MCF 10A (cell line): ENCODE measurements at regions of chr7 and their contacts with region 1.

Region 1: DNA sequence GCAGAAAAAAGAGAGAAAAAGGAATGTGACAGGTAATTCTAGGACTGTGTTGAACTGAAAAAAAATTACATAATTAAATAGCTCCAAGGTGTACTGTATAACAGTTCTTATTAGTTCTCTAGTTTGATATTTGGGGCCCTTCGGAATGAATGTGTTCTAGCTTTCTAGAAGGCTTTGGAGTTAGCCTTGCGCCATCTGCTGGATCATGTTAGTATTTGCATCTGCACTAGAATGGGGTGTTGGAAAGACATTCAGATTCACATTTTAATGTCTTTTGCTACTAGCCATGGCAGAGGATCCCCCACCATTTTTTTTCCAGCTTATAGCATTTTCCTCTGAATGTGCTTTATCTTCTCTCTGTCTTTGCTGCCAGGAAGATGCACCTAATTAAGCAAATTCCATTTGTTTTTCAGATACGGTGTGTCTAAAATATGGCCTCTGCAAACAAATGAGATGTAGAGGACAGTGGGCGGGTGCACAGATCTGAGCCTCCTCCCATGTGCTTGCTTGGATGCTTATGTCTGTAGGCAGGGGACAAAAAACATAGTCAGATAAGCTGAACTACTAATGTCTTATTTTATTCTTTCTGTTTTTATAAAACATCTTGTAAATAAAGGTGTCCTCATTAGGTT is 238.5 kb downstream of the PHF14 start:
- DNase-seq: peak; percentile 85
- H3K4me3 Mint-ChIP-seq: no peak overlapping the region
- H3K27ac Mint-ChIP-seq: no peak overlapping the region
- H3K4me1 Mint-ChIP-seq: no peaks in the 10 kb centered on the region
- H3K27me3 Mint-ChIP-seq: no peaks in the 10 kb centered on the region
- CTCF ChIP-seq: peak; percentile 78

Region 2: DNA sequence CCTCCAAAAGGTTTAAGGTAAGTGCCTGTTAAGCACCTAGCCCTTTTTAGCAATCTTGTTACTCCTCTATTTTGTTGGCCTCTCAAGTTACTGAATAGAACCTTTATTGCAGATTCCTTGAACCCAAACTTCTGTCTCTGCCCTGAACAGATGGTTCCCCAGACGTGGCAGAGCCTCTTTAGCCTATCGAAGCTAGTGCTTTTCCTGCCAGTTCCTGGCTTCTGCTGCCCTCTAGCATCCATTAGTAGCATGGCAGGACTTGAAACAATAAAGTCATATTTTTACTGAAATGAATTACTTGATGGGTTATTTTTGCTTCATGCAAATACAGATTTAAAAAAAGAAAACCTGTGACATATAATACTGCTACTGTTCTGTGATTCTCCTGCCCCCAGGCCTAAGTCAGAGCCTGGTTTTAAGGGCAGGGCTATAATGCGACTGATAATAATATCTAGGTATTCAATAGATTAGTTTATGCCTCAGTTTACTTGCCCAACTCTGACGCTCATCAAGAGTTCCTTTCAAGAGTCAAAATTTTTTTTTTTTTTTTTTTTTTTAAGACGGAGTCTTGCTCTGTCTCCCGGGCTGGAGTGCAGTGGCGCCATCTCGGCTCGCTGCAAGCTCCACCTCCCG is 322.8 kb before region 1 on chr7:
- CTCF ChIA-PET with region 1: no interaction called
- POLR2A ChIA-PET with region 1: no interaction called
- intact Hi-C with region 1: loop called (anchors 2 kb)
- DNase-seq: peak; percentile 68
- H3K4me3 Mint-ChIP-seq: no peak overlapping the region
- H3K27ac Mint-ChIP-seq: no peak overlapping the region
- H3K4me1 Mint-ChIP-seq: no peaks in the 10 kb centered on the region
- H3K27me3 Mint-ChIP-seq: no peaks in the 10 kb centered on the region
- CTCF ChIP-seq: peak; percentile 83

Region 3: DNA sequence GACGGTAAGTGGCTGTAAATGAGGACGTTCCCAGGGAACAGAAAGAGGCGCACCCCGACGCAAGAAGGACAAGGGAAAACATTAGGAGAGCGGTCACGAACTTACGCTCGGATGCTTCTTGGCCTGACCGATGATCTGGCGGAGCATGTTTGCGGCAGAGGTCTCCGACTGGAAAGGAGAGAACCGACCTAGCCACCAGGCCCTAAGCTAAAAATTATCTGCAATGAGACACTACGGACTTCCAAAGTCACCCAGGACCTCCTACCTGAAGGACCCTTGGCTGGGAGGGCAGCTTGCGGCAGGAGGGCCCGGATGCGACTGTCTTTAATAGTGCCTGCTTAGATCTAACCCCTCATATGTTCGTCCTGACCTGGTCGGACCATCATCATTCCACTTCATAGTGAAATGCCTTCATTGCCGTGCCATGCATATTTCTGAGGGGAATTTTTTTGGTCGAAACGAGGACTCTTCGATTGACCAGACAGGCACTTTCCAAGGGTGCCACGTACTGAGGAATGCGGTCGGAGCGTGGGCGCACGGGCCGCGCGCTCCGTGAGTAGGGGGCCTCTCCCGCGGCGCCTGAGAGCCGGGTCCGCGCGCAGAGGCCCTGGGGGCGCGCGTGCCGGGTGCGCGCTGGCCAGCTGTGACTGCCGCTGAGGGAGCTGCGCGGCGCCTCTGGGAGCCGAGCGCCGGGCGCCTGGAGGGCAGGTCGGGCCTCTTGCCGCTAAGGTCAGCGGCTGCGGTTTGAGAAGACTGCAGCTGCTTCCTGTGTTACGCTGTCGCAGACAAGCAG is 272.1 kb before region 1 on chr7:
- CTCF ChIA-PET with region 1: interaction called, 7 read pairs
- POLR2A ChIA-PET with region 1: no interaction called
- intact Hi-C with region 1: loop called (anchors 5 kb)
- DNase-seq: peak; percentile 94
- H3K4me3 Mint-ChIP-seq: no peak overlapping the region
- H3K27ac Mint-ChIP-seq: no peak overlapping the region
- H3K4me1 Mint-ChIP-seq: peaks cover 3% of the 10 kb centered on the region
- H3K27me3 Mint-ChIP-seq: no peaks in the 10 kb centered on the region
- CTCF ChIP-seq: no peak

Region 4: GRCh38 chr7:11194492-11194891 is 17.7 kb before region 1 on chr7:
- CTCF ChIA-PET with region 1: interaction called, 35 read pairs
- POLR2A ChIA-PET with region 1: no interaction called
- intact Hi-C with region 1: no loop called
- DNase-seq: peak; percentile 10
- H3K4me3 Mint-ChIP-seq: peak overlapping the region; percentile 11
- H3K27ac Mint-ChIP-seq: peak overlapping the region; percentile 54
- H3K4me1 Mint-ChIP-seq: peaks cover 22% of the 10 kb centered on the region
- H3K27me3 Mint-ChIP-seq: no peaks in the 10 kb centered on the region
- CTCF ChIP-seq: no peak

Region 5: DNA sequence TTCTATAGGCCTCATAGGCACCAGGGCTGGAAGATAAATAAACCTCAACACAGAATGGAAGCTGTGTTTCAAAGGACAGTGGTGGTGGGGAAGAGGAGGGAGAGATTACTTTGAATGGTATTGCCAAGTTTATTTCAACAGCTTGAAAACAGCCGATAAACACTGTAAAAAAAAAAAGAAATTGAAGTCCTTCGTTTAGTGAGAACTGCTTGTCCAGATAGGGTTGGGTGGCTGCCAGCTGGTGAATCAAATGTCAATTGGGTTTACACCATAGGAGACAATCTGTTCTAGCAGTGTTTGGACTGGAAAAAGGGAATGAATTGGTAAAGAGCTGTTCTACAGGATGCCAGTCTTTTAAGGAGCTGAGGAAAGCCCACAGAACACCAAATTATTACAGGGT is 16.3 kb after region 1 on chr7:
- CTCF ChIA-PET with region 1: interaction called, 64 read pairs
- POLR2A ChIA-PET with region 1: no interaction called
- intact Hi-C with region 1: no loop called
- DNase-seq: peak; percentile 77
- H3K4me3 Mint-ChIP-seq: peak overlapping the region; percentile 4
- H3K27ac Mint-ChIP-seq: peak overlapping the region; percentile 85
- H3K4me1 Mint-ChIP-seq: peaks cover 30% of the 10 kb centered on the region
- H3K27me3 Mint-ChIP-seq: no peaks in the 10 kb centered on the region
- CTCF ChIP-seq: no peak

Region 6: DNA sequence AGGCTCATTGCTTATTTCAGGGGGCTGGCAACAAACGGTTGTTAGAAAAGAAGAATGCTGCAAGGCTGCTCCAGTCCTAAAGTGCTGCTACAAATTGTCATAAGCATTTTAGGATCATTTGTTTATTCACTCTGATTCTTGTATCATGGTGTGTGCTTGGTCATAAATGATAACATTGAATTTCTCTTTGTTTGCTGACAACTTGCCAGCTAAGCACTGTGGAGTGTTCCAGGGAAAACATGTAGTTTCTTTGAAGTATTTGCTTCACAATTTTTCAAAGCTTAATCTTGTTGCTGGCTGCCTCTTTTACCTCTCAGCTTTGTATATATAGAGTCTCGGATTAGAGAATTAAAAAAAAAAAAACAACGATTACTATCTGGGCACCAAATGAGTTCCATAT is 24.5 kb after region 1 on chr7:
- CTCF ChIA-PET with region 1: interaction called, 11 read pairs
- POLR2A ChIA-PET with region 1: no interaction called
- intact Hi-C with region 1: no loop called
- DNase-seq: no peak
- H3K4me3 Mint-ChIP-seq: no peak overlapping the region
- H3K27ac Mint-ChIP-seq: no peak overlapping the region
- H3K4me1 Mint-ChIP-seq: peaks cover 11% of the 10 kb centered on the region
- H3K27me3 Mint-ChIP-seq: no peaks in the 10 kb centered on the region
- CTCF ChIP-seq: no peak

Region 7: GRCh38 chr7:11343818-11344413 is 131.7 kb after region 1 on chr7:
- CTCF ChIA-PET with region 1: interaction called, 13 read pairs
- POLR2A ChIA-PET with region 1: no interaction called
- intact Hi-C with region 1: loop called (anchors 2 kb)
- DNase-seq: peak; percentile 62
- H3K4me3 Mint-ChIP-seq: no peak overlapping the region
- H3K27ac Mint-ChIP-seq: no peak overlapping the region
- H3K4me1 Mint-ChIP-seq: peaks cover 12% of the 10 kb centered on the region
- H3K27me3 Mint-ChIP-seq: no peaks in the 10 kb centered on the region
- CTCF ChIP-seq: peak; percentile 62